Head of caudate nucleus (tissue), 42 donors: ENCODE measurements at regions of chr19 and their contacts with region 1.

Region 1: GRCh38 chr19:41263850-41264580 is at the start of gene HNRNPUL1:
- DNase-seq: peak; percentile 95 to 99 (median 98)

Region 2: GRCh38 chr19:41308392-41309179 is 44.6 kb after region 1 on chr19:
- intact Hi-C with region 1: loop called (anchors 2 kb)
- DNase-seq: peak; percentile 53 to 97 (median 92)